ENCODE measurements at regions of chr19 and their contacts with region 1.

Region 1: DNA sequence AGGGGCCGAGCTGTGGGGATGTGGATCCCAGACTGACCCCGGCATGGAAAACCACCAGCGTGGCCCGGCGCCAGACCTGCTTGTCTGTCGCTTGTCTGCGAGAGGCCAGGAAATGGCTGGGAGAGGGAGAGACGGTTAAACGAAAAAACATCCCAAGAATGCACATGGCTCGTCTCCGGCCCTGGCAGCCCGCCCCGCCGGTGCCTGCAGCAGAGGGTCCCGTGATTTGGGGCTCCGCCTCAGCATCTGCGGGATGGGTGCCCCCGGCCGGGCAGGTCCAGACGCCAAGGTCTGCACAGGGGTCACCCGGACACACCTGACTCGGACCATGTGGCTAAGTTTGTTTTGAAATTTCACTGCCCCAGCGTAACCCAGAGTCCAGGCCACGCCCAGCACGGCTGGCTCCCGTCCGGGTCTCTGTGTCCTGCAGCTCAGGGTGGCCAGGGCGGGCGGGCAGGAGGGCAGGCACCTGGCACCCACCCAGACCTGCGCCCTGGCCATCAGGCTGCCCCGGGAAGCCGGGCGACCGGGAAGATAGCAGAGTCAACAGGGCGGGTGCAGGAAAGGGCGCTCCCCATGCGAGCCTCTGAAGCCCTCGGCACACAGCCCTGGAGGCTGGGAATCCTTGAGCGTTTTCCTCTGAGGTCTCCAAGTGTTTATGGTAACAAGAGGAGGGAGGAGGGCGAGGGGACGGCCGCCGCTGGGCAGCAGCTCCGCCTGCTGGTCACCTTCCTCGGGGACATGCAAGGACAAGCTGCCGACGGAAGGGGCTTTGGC is 103.2 kb downstream of the GADD45B start:
- DNase-seq: peak; percentile 76 to 91
- H3K4me3 ChIP-seq: peak overlapping the region; percentile 26 to 71 (median 58)
- H3K27ac ChIP-seq: no peak overlapping the region
- H3K4me1 ChIP-seq: peaks cover 4 to 17% (median 12%) of the 10 kb centered on the region in 4 experiments
- H3K27me3 ChIP-seq: no peaks in the 10 kb centered on the region; a peak in 1 of 7 replicates
- CTCF ChIP-seq: peak; percentile 88 to 96 (median 91)
- EP300 ChIP-seq: no peak
- POLR2A ChIP-seq: no peak
- RAD21 ChIP-seq: peak; percentile 88 to 91

Region 2: DNA sequence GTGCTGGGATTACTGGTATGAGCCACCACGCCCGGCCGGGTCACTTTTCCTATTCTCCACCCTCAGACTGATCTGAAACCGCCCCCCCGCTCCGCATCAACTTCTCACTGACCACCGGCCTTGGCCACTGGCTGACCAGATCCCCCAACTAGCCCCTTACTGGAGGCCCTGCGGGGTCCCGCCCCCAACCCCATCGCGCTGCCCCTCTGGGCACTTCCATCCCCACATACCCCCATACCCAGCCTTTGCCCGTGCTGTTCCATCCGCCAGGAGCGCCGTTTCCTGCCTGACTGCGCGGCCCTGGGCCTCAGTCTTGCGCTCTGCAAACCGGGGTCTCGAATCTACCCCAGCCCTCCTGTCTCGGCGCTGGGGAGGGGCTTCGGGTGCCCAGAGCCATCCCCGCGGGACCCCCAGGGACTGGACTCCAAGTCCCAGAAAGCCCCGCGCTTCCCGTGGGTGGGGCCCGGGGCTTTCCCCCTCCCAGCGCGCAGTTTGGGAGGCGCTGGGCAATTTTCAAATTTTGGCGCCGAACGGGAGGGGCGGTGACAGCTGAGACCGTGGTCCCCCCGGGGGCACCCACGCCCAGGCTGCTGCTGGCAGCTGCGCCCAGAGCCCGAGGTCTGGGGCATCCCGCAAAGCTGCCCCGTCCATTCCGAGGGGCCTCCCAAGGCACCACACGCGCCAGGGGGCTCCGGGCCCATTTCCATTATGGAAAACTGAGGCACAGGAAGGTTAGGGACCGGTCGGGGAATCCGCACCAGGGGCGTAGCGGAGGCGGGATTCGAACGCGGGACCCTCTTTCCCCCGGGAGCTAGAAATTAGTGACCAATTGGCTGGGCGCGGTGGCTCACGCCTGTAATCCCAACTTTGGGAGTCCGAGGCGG is 117.1 kb before region 1 on chr19:
- CTCF ChIA-PET with region 1: interaction called, 12 read pairs
- POLR2A ChIA-PET with region 1: interaction called, 6 read pairs
- DNase-seq: peak in 1 of 2 experiments; percentile 82
- H3K4me3 ChIP-seq: peak overlapping the region; percentile 37 to 65 (median 60)
- H3K27ac ChIP-seq: no peak overlapping the region
- H3K4me1 ChIP-seq: peaks cover 0 to 4% (median 0%) of the 10 kb centered on the region in 4 experiments; a peak in 2 of 7 replicates
- H3K27me3 ChIP-seq: no peaks in the 10 kb centered on the region
- CTCF ChIP-seq: peak in 1 of 3 experiments; percentile 10; a peak in 1 of 4 replicates
- EP300 ChIP-seq: no peak
- POLR2A ChIP-seq: no peak
- RAD21 ChIP-seq: no peak

Region 3: GRCh38 chr19:2543463-2544442 is 35.3 kb before region 1 on chr19:
- CTCF ChIA-PET with region 1: interaction called, 24 read pairs
- POLR2A ChIA-PET with region 1: interaction called, 17 read pairs
- DNase-seq: peak; percentile 81 to 84
- H3K4me3 ChIP-seq: no peak overlapping the region; a peak in 1 of 8 replicates
- H3K27ac ChIP-seq: peak overlapping the region; percentile 40; the same call in 1 of the 2 replicates
- H3K4me1 ChIP-seq: peaks cover 3 to 26% (median 20%) of the 10 kb centered on the region in 4 experiments
- H3K27me3 ChIP-seq: no peaks in the 10 kb centered on the region; a peak in 2 of 7 replicates
- CTCF ChIP-seq: peak in 2 of 3 experiments; percentile 19 to 28; a peak in 2 of 4 replicates
- EP300 ChIP-seq: peak in 1 of 2 experiments; percentile 35; a peak in 1 of 3 replicates
- POLR2A ChIP-seq: peak in 1 of 2 experiments; percentile 81; a peak in 2 of 3 replicates
- RAD21 ChIP-seq: peak; percentile 27 to 53

Region 4: GRCh38 chr19:2602391-2603181 is 23.5 kb after region 1 on chr19:
- CTCF ChIA-PET with region 1: interaction called, 21 read pairs
- POLR2A ChIA-PET with region 1: interaction called, 4 read pairs
- DNase-seq: peak in 1 of 2 experiments; percentile 80
- H3K4me3 ChIP-seq: peak overlapping the region in 3 of 4 experiments; percentile 10 to 45 (median 27); a peak in 4 of 8 replicates
- H3K27ac ChIP-seq: no peak overlapping the region
- H3K4me1 ChIP-seq: peaks cover 0 to 8% (median 2%) of the 10 kb centered on the region in 4 experiments; a peak in 4 of 7 replicates
- H3K27me3 ChIP-seq: peaks cover 0 to 4% (median 0%) of the 10 kb centered on the region in 4 experiments; a peak in 2 of 7 replicates
- CTCF ChIP-seq: no peak
- EP300 ChIP-seq: no peak
- POLR2A ChIP-seq: peak in 1 of 2 experiments; percentile 52; a peak in 1 of 3 replicates
- RAD21 ChIP-seq: no peak; a peak in 1 of 4 replicates

Region 5: DNA sequence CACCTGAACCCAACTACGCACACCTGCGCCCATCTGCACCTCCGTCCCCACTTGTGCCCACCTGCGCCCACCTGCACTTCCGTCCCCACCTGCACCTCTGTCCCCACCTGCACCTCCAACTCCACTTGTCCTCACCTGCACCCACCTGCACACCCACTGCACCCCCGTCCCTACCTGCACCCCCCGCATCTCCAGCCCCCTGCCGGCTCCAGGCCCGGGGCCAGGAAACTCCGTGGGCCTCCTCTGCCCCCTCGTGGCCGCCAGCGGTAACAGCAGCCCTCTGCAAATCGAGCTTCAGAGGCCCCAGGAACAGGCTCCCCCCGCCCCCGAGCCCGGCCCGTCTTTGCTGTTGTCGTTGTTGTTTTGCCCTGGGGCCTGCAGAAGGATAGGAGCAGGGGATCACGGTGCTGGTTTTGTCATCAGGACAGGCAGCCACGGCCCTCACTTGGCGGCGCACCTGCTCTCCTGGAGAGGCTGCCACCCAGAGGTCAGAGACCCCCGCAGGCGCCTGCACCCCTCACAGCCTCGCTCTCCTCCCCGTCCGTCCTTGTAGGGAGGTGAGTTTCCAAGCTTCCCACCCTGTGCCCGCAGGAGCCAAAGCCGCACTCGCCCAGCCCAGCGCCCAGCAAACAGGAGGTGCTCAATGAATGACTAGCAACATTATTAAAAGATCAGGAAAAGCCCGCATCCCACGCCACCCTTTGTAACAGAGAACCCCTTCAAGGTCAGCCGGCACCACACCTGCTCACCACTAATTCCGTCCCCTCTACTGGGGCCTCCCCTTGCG is 58.0 kb after region 1 on chr19:
- CTCF ChIA-PET with region 1: interaction called, 14 read pairs
- POLR2A ChIA-PET with region 1: interaction called, 3 read pairs
- DNase-seq: peak in 1 of 2 experiments; percentile 89
- H3K4me3 ChIP-seq: peak overlapping the region in 3 of 4 experiments; percentile 36 to 54 (median 38); a peak in 6 of 8 replicates
- H3K27ac ChIP-seq: no peak overlapping the region
- H3K4me1 ChIP-seq: peaks cover 0 to 4% (median 2%) of the 10 kb centered on the region in 4 experiments; a peak in 3 of 7 replicates
- H3K27me3 ChIP-seq: no peaks in the 10 kb centered on the region; a peak in 1 of 7 replicates
- CTCF ChIP-seq: peak; percentile 78 to 84 (median 82)
- EP300 ChIP-seq: no peak
- POLR2A ChIP-seq: no peak
- RAD21 ChIP-seq: peak; percentile 83 to 85

Region 6: GRCh38 chr19:2719910-2720776 is 141.1 kb after region 1 on chr19:
- CTCF ChIA-PET with region 1: no interaction called
- POLR2A ChIA-PET with region 1: no interaction called
- DNase-seq: peak in 1 of 2 experiments; percentile 76
- H3K4me3 ChIP-seq: peak overlapping the region; percentile 39 to 89 (median 52)
- H3K27ac ChIP-seq: no peak overlapping the region
- H3K4me1 ChIP-seq: peaks cover 0 to 15% (median 6%) of the 10 kb centered on the region in 4 experiments; a peak in 6 of 7 replicates
- H3K27me3 ChIP-seq: peaks cover 0 to 7% (median 3%) of the 10 kb centered on the region in 4 experiments; a peak in 4 of 7 replicates
- CTCF ChIP-seq: no peak
- EP300 ChIP-seq: no peak
- POLR2A ChIP-seq: no peak
- RAD21 ChIP-seq: no peak

Measured in H1 (cell line).